Activated B cell treated with CpG ODN at 0.5 μM for 24 hours (primary cell): ENCODE measurements at regions of chr2 and their contacts with region 1.

Region 1: GRCh38 chr2:136384531-136385303 is 266.8 kb upstream of the CXCR4 start:
- DNase-seq: no peak
- ATAC-seq: peak; percentile 67
- H3K4me3 Mint-ChIP-seq: peak overlapping the region; percentile 33
- H3K27ac Mint-ChIP-seq: peak overlapping the region; percentile 94
- H3K4me1 Mint-ChIP-seq: peaks cover 50% of the 10 kb centered on the region
- H3K27me3 Mint-ChIP-seq: no peaks in the 10 kb centered on the region
- CTCF ChIP-seq: peak; percentile 38

Region 2: DNA sequence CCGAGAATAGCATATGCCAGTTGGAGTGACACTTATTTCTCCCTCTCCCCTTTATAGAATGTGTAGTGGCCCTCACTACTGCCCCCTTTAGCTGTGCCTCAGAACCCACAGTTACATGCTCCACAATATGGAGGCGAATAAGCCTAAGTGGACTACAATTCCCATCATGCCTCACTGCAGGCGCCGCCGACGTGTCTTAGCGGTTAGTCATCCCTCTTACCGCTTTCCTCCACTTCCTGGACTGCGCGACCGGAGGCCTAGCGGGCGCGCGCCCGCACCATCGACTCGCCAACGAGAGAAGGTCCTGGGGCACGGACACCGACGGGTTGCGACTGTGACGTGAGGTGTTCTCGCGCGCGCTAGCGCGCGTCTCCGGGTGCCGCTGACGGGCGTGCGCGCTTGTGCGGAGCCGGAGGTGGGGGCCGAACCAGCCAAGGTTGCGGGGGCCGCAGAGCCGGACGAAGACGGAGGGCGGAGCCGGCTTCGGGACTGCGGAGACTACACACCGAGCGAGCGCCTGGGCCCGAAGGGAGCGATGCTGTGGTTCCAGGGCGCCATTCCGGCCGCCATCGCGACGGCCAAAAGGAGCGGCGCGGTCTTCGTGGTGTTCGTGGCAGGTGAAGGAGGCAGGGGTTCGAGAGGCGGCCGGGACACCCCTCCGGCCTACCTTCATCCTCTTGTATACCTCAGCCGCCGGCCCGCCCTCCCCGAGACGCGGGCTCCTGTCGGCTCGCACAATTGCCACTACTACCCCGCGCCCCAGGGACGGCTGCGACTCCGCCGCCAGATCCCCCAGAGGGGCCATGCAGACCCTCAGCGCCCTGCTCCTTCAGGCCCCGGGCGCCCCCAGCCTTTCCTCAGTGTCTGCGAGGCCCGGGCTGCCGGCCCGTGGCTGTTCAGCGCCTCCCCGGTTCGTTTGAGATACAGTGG is 643.1 kb before region 1 on chr2 and contains the start of gene UBXN4:
- CTCF ChIA-PET with region 1: no interaction called
- POLR2A ChIA-PET with region 1: no interaction called
- intact Hi-C with region 1: loop called (anchors 5 kb)
- DNase-seq: peak; percentile 81
- ATAC-seq: peak; percentile 87
- H3K4me3 Mint-ChIP-seq: peak within 1 kb of the TSS; percentile 99
- H3K27ac Mint-ChIP-seq: peak within 1 kb of the TSS; percentile 99
- H3K4me1 Mint-ChIP-seq: peaks cover 40% of the 10 kb centered on the region
- H3K27me3 Mint-ChIP-seq: no peaks in the 10 kb centered on the region
- CTCF ChIP-seq: no peak
- total RNA-seq, gene UBXN4: 87.8 and 107 TPM in 2 replicates

Region 3: DNA sequence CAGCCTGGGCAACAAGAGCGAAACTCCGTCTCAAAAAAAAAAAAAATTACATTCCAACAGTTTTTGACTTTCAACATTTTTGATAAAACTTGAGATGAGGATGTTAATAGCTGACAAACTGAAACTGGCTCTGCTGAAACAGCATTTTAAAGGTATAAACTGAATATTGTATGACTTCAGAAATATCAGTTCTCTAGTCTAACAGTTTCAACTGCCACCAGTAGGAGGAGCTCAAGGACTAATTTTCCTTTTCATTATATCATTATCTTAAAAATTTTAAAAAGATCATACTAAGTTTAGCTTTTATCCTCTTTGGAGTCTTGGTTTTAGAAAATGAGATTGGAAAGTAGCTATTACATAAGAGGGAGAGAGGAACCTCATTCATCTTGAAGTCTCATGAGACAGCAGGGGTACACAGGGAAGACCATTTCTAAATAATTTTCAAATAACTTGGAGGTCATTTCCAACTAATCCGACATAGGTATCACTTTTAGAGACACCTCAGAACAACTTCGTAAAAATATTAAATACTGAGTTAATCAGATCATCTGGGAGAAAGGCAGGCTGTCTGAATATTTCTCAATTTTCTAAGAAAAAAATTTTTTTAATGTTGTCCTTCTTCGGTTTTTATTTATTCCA is 470.9 kb before region 1 on chr2:
- CTCF ChIA-PET with region 1: interaction called, 298 read pairs
- POLR2A ChIA-PET with region 1: interaction called, 17 read pairs
- intact Hi-C with region 1: loop called (anchors 1 kb)
- DNase-seq: no peak
- ATAC-seq: peak; percentile 64
- H3K4me3 Mint-ChIP-seq: no peak overlapping the region
- H3K27ac Mint-ChIP-seq: no peak overlapping the region
- H3K4me1 Mint-ChIP-seq: peaks cover 6% of the 10 kb centered on the region
- H3K27me3 Mint-ChIP-seq: no peaks in the 10 kb centered on the region
- CTCF ChIP-seq: peak; percentile 87

Region 4: GRCh38 chr2:136129601-136130000 is 255.1 kb before region 1 on chr2:
- CTCF ChIA-PET with region 1: interaction called, 9 read pairs
- POLR2A ChIA-PET with region 1: interaction called, 44 read pairs
- intact Hi-C with region 1: loop called (anchors 1 kb)
- DNase-seq: no peak
- ATAC-seq: no peak
- H3K4me3 Mint-ChIP-seq: peak overlapping the region; percentile 73
- H3K27ac Mint-ChIP-seq: peak overlapping the region; percentile 99
- H3K4me1 Mint-ChIP-seq: peaks cover 99% of the 10 kb centered on the region
- H3K27me3 Mint-ChIP-seq: no peaks in the 10 kb centered on the region
- CTCF ChIP-seq: no peak

Region 5: GRCh38 chr2:136246086-136246669 is 138.5 kb before region 1 on chr2:
- CTCF ChIA-PET with region 1: no interaction called
- POLR2A ChIA-PET with region 1: interaction called, 20 read pairs
- intact Hi-C with region 1: no loop called
- DNase-seq: no peak
- ATAC-seq: peak; percentile 86
- H3K4me3 Mint-ChIP-seq: peak overlapping the region; percentile 35
- H3K27ac Mint-ChIP-seq: peak overlapping the region; percentile 76
- H3K4me1 Mint-ChIP-seq: peaks cover 65% of the 10 kb centered on the region
- H3K27me3 Mint-ChIP-seq: no peaks in the 10 kb centered on the region
- CTCF ChIP-seq: no peak